ENCODE measurements at regions of chr9 and their contacts with region 1.

Region 1: DNA sequence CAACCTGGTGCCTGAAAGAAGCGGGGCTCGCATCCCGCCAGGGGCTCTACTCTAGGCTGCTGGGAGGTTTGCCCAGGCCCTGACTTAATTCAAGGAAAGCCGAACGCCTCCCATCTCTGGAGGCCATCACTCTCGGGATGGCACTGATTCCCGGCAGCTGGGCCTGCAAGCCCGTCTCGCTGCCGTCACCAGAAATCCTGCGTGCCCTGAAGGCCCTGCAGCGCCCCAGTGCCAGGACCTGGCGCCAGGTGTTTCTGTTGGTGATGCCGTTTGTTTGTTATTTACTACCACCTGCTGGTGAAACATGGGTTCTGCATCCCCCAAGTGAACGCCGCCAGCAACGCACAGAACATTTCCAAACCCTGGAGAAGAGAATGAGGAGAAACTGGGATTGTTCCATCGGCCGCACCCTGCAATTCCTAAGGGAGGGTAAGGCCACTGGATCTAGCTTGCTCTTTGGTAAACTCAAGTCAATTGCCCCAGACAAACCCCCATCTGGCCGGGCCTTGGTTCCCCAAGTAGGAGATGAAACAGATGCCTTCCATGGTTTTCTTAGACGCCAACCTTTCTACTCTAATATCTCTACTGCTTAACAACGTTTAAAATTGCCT is 77.9 kb downstream of the AK8 start:
- DNase-seq: peak; percentile 77
- H3K4me3 ChIP-seq: no peak overlapping the region
- H3K27ac ChIP-seq: peak overlapping the region in 1 of 4 donors; percentile 35
- H3K4me1 ChIP-seq: peaks cover 0 to 16% (median 10%) of the 10 kb centered on the region in 4 donors
- H3K27me3 ChIP-seq: peaks cover 33% of the 10 kb centered on the region
- CTCF ChIP-seq: peak; percentile 88 to 93 (median 92)
- EP300 ChIP-seq: no peak
- POLR2A ChIP-seq: no peak

Region 2: GRCh38 chr9:132406554-132407122 is 393.5 kb before region 1 on chr9 and contains the start of gene TTF1:
- in situ Hi-C with region 1: loop called in 3 of 4 experiments (anchors 10 to 25 kb)
- intact Hi-C with region 1: no loop called
- DNase-seq: peak; percentile 93
- H3K4me3 ChIP-seq: peak within 1 kb of the TSS; percentile 61 to 94 (median 74)
- H3K27ac ChIP-seq: peak within 1 kb of the TSS; percentile 44 to 79 (median 66)
- H3K4me1 ChIP-seq: peaks cover 19 to 46% (median 24%) of the 10 kb centered on the region in 4 donors
- H3K27me3 ChIP-seq: peaks cover 27% of the 10 kb centered on the region
- CTCF ChIP-seq: no peak
- EP300 ChIP-seq: no peak
- POLR2A ChIP-seq: no peak
- total RNA-seq, gene TTF1: 6.4 to 14.2 (median 9.4) TPM

Region 3: GRCh38 chr9:132507746-132508469 is 292.2 kb before region 1 on chr9:
- in situ Hi-C with region 1: loop called in 2 of 4 experiments (anchors 5 to 10 kb)
- intact Hi-C with region 1: no loop called
- DNase-seq: peak; percentile 68
- H3K4me3 ChIP-seq: no peak overlapping the region
- H3K27ac ChIP-seq: no peak overlapping the region
- H3K4me1 ChIP-seq: no peaks in the 10 kb centered on the region
- H3K27me3 ChIP-seq: peaks cover 40% of the 10 kb centered on the region
- CTCF ChIP-seq: peak; percentile 77 to 82 (median 81)
- EP300 ChIP-seq: no peak
- POLR2A ChIP-seq: no peak

Measured in transverse colon (tissue), 4 donors.